Gastrocnemius medialis (tissue), 4 donors: ENCODE measurements at regions of chr14 and their contacts with region 1.

Region 1: DNA sequence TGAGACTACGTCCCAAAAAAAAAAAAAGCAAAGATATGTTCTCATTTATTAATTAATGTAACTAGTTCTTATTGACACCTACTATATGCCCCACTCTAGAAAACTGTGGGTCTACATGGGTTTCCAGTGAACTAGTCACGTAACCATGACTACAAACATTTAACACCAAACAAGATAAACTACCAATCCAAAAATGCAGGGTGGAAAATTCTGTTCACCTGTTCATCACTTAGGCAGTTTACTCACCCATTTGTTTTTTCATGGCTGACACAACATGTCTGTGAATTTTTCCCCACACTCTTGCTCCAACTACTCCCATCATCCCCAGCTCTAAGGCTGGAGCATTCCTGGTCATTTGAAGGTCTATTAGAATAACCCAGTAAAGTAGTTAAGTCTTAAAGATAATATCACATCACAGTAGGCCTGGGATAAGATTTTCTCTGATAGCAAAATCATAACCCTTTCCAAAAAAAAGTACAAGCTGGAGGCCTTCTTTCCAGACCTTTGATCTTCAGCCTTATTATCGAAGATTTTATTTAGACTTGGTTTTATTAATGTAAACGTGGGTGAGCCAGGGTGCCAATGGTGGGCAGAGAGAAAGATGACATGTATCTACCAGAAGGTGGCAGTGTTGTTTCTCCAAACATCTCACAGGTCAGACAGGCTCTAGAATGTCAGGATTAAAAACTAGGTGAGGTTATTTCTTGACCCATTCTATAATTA is 61.6 kb upstream of the DAAM1 start:
- DNase-seq: no peak
- ATAC-seq: peak; percentile 84 to 92
- H3K4me3 ChIP-seq: no peak overlapping the region
- H3K27ac ChIP-seq: no peak overlapping the region
- H3K4me1 ChIP-seq: no peaks in the 10 kb centered on the region
- H3K27me3 ChIP-seq: no peaks in the 10 kb centered on the region
- CTCF ChIP-seq: peak; percentile 72 to 85 (median 79)
- POLR2A ChIP-seq: no peak

Region 2: GRCh38 chr14:58846682-58847465 is 280.0 kb before region 1 on chr14:
- in situ Hi-C with region 1: no loop called
- intact Hi-C with region 1: no loop called
- DNase-seq: no peak
- ATAC-seq: no peak
- H3K4me3 ChIP-seq: no peak overlapping the region
- H3K27ac ChIP-seq: no peak overlapping the region
- H3K4me1 ChIP-seq: no peaks in the 10 kb centered on the region
- H3K27me3 ChIP-seq: no peaks in the 10 kb centered on the region
- CTCF ChIP-seq: no peak
- POLR2A ChIP-seq: no peak

Region 3: GRCh38 chr14:59028476-59029202 is 98.2 kb before region 1 on chr14:
- in situ Hi-C with region 1: loop called in 1 of 4 experiments (anchors 10 kb)
- intact Hi-C with region 1: loop called (anchors 5 kb)
- DNase-seq: peak in 1 of 2 donors; percentile 10
- ATAC-seq: peak in 1 of 2 donors; percentile 56
- H3K4me3 ChIP-seq: no peak overlapping the region
- H3K27ac ChIP-seq: no peak overlapping the region
- H3K4me1 ChIP-seq: peaks cover 0 to 4% of the 10 kb centered on the region in 2 donors
- H3K27me3 ChIP-seq: no peaks in the 10 kb centered on the region
- CTCF ChIP-seq: peak; percentile 6 to 66 (median 45)
- POLR2A ChIP-seq: no peak

Region 4: DNA sequence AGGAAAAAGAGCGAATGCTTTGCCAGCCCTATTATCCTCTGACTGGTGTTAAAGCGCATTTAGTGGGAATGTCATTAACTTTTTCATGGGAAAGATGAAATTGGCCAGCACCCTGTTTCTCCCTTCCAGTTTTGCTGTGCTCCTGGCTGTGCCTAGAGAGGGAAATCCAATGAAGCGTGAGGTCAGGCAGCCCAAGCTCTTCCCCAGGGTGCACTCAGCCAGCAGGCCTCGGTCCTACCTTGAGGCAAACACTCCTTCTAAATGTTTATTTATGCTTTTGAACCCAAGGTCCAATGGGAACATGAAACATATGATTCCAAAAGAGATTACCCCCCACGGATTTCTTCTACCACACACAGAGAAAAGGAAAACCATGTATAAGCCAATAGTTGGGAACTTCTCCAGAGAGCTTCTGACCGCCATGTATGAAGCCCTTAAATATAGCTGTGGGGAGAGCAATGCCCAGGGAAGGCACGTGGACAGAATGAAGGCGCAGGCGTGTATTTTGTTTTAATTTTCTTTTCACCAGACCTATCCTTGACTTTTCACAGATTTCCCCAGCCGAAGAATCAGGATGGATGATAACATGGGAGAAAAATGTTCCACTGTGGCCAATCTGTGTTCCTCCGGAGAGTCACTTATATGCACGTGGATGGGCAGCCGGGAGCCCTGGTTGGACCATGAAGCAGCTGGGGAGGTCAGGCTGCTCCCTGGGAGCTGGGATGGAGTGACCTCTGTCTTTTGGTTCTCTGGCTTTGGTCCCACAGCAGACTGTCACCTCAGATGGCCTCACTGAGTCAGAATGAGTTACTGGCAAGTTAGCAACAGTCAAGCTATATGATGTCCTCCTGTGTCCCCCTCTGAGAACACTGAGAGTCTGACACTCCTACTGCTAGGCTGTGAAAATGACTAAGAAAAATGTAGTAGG is 301.0 kb after region 1 on chr14:
- in situ Hi-C with region 1: no loop called
- intact Hi-C with region 1: no loop called
- DNase-seq: peak; percentile 12 to 44
- ATAC-seq: peak; percentile 59 to 74
- H3K4me3 ChIP-seq: no peak overlapping the region
- H3K27ac ChIP-seq: peak overlapping the region; percentile 12 to 71 (median 41)
- H3K4me1 ChIP-seq: peaks cover 0 to 9% of the 10 kb centered on the region in 2 donors
- H3K27me3 ChIP-seq: no peaks in the 10 kb centered on the region
- CTCF ChIP-seq: no peak
- POLR2A ChIP-seq: no peak

Region 5: GRCh38 chr14:59438195-59438647 is 311.4 kb after region 1 on chr14:
- in situ Hi-C with region 1: loop called (anchors 5 kb)
- intact Hi-C with region 1: no loop called
- DNase-seq: no peak
- ATAC-seq: no peak
- H3K4me3 ChIP-seq: no peak overlapping the region
- H3K27ac ChIP-seq: no peak overlapping the region
- H3K4me1 ChIP-seq: peaks cover 0 to 9% of the 10 kb centered on the region in 2 donors
- H3K27me3 ChIP-seq: no peaks in the 10 kb centered on the region
- CTCF ChIP-seq: no peak
- POLR2A ChIP-seq: no peak

Region 6: GRCh38 chr14:59490756-59491155 is 363.9 kb after region 1 on chr14:
- in situ Hi-C with region 1: no loop called
- intact Hi-C with region 1: no loop called
- DNase-seq: no peak
- ATAC-seq: no peak
- H3K4me3 ChIP-seq: no peak overlapping the region
- H3K27ac ChIP-seq: no peak overlapping the region
- H3K4me1 ChIP-seq: peaks cover 6 to 13% of the 10 kb centered on the region in 2 donors
- H3K27me3 ChIP-seq: no peaks in the 10 kb centered on the region
- CTCF ChIP-seq: no peak
- POLR2A ChIP-seq: no peak

Region 7: DNA sequence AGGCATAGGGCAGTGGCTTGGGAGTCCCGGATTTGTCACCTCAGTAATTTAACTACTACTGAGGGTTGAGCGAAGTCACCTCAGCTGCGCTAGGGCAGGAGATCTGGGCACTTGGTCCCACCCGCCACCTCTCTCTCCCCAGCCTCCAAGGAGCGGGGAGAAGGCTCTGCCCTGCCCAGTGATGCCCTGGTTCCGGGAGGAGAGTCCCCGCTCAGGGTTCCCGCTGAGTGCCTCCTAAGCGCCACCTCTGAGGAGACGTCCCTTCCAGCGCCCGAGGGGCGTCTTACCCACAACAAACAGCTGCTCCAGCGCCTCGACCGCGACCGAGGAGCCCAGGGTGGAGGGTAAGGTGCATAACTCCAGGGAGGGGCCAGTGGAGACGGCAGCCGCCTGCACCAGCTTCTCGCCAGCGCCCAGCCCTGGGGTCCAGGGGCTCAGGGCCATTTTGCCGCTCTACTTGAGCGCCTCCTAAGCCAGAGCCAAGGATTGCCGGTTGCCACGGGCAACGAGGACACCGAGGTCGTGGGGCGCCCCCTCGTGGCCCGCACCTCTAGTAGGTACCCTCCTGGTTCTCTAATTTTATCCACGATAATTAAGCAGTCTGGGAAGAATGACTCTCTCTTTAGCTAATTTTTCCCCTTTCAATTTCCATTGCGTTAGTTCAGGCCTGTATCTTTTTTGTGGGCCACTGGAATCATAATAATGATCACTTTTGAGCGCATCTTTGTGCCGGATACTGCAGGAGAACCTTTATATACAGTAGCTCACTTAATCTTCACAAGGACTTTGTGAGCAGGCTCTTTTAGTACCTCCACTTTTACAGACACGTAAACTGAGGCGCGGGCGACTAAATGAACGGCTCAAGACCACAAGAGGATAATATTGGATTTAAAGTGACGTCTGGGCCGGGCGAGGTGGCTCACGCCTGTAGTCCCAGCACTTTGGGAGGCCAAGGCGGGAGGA is 449.7 kb after region 1 on chr14 and contains the start of gene CCDC175:
- in situ Hi-C with region 1: loop called in 1 of 4 experiments (anchors 10 kb)
- intact Hi-C with region 1: loop called (anchors 10 kb)
- DNase-seq: peak; percentile 47 to 60
- ATAC-seq: peak; percentile 73 to 87
- H3K4me3 ChIP-seq: peak within 1 kb of the TSS; percentile 39 to 51 (median 50)
- H3K27ac ChIP-seq: no peak within 1 kb of the TSS
- H3K4me1 ChIP-seq: no peaks in the 10 kb centered on the region
- H3K27me3 ChIP-seq: no peaks in the 10 kb centered on the region
- CTCF ChIP-seq: peak; percentile 39 to 70 (median 55)
- POLR2A ChIP-seq: no peak
- total RNA-seq, gene CCDC175: not detected